CD4-positive, alpha-beta T cell (primary cell): ENCODE measurements at regions of chr9 and their contacts with region 1.

Region 1: GRCh38 chr9:69193685-69194032 is 19.6 kb downstream of the TJP2 start:
- DNase-seq: no peak
- ATAC-seq: no peak
- H3K4me3 ChIP-seq: no peak overlapping the region
- H3K4me3 Mint-ChIP-seq: no peak overlapping the region
- H3K27ac ChIP-seq: no peak overlapping the region
- H3K27ac Mint-ChIP-seq: no peak overlapping the region
- H3K4me1 ChIP-seq: peaks cover 3% of the 10 kb centered on the region
- H3K4me1 Mint-ChIP-seq: peaks cover 27% of the 10 kb centered on the region
- H3K27me3 ChIP-seq: no peaks in the 10 kb centered on the region
- H3K27me3 Mint-ChIP-seq: no peaks in the 10 kb centered on the region
- CTCF ChIP-seq: no peak

Region 2: GRCh38 chr9:69149321-69149807 is 44.3 kb before region 1 on chr9:
- CTCF ChIA-PET with region 1: no interaction called
- POLR2A ChIA-PET with region 1: no interaction called
- intact Hi-C with region 1: loop called in 1 of 2 experiments (anchors 2 kb)
- DNase-seq: no peak
- ATAC-seq: no peak
- H3K4me3 ChIP-seq: no peak overlapping the region
- H3K4me3 Mint-ChIP-seq: no peak overlapping the region
- H3K27ac ChIP-seq: no peak overlapping the region
- H3K27ac Mint-ChIP-seq: no peak overlapping the region
- H3K4me1 ChIP-seq: no peaks in the 10 kb centered on the region
- H3K4me1 Mint-ChIP-seq: no peaks in the 10 kb centered on the region
- H3K27me3 ChIP-seq: no peaks in the 10 kb centered on the region
- H3K27me3 Mint-ChIP-seq: no peaks in the 10 kb centered on the region
- CTCF ChIP-seq: no peak

Region 3: DNA sequence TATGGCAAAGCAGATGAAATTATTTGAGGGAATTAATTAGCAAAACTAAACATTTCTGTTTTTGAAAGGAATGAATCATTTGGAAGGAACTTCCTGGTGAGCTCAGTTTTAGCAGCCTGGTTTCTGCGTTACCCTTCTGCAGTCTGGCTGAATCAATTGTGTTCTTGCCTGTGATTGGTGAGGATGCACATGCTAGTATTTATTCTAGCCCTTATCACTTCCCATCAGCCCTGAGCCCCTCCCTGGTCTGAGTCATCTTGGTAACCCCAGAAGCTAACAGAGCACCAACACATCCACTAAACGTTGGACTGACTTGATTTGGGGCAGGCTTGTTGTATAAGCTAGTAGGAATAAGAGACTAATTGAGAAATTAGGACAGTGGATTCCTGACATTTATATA is 13.0 kb before region 1 on chr9:
- CTCF ChIA-PET with region 1: interaction called, 13 read pairs
- POLR2A ChIA-PET with region 1: interaction called, 3 read pairs
- intact Hi-C with region 1: no loop called
- DNase-seq: peak in 9 of 14 experiments; percentile 18 to 73 (median 48)
- ATAC-seq: peak; percentile 81
- H3K4me3 ChIP-seq: no peak overlapping the region
- H3K4me3 Mint-ChIP-seq: no peak overlapping the region
- H3K27ac ChIP-seq: no peak overlapping the region
- H3K27ac Mint-ChIP-seq: peak overlapping the region; percentile 18
- H3K4me1 ChIP-seq: peaks cover 4% of the 10 kb centered on the region
- H3K4me1 Mint-ChIP-seq: peaks cover 40% of the 10 kb centered on the region
- H3K27me3 ChIP-seq: no peaks in the 10 kb centered on the region
- H3K27me3 Mint-ChIP-seq: peaks cover 5% of the 10 kb centered on the region
- CTCF ChIP-seq: no peak